ENCODE measurements at regions of chr12 and their contacts with region 1.

Region 1: GRCh38 chr12:26274441-26275312 is 79.3 kb downstream of the SSPN start:
- DNase-seq: peak; percentile 26
- H3K4me3 Mint-ChIP-seq: no peak overlapping the region
- H3K27ac Mint-ChIP-seq: peak overlapping the region; percentile 0
- H3K4me1 Mint-ChIP-seq: peaks cover 20% of the 10 kb centered on the region
- H3K27me3 Mint-ChIP-seq: no peaks in the 10 kb centered on the region

Region 2: GRCh38 chr12:26298785-26299621 is 24.3 kb after region 1 on chr12:
- intact Hi-C with region 1: loop called (anchors 1 kb)
- DNase-seq: peak; percentile 3
- H3K4me3 Mint-ChIP-seq: peak overlapping the region; percentile 17
- H3K27ac Mint-ChIP-seq: no peak overlapping the region
- H3K4me1 Mint-ChIP-seq: peaks cover 24% of the 10 kb centered on the region
- H3K27me3 Mint-ChIP-seq: peaks cover 14% of the 10 kb centered on the region

Region 3: GRCh38 chr12:26346700-26347099 is 72.0 kb after region 1 on chr12:
- intact Hi-C with region 1: loop called (anchors 5 kb)
- DNase-seq: no peak
- H3K4me3 Mint-ChIP-seq: no peak overlapping the region
- H3K27ac Mint-ChIP-seq: no peak overlapping the region
- H3K4me1 Mint-ChIP-seq: peaks cover 17% of the 10 kb centered on the region
- H3K27me3 Mint-ChIP-seq: no peaks in the 10 kb centered on the region